Activated CD4-positive, alpha-beta memory T cell treated with anti-CD3 and anti-CD28 coated beads, Interleukin-2, amount 10 ng/mL, durations not matched to agents 7 days and 5 days (primary cell): ENCODE measurements at regions of chr3 and their contacts with region 1.

Region 1: DNA sequence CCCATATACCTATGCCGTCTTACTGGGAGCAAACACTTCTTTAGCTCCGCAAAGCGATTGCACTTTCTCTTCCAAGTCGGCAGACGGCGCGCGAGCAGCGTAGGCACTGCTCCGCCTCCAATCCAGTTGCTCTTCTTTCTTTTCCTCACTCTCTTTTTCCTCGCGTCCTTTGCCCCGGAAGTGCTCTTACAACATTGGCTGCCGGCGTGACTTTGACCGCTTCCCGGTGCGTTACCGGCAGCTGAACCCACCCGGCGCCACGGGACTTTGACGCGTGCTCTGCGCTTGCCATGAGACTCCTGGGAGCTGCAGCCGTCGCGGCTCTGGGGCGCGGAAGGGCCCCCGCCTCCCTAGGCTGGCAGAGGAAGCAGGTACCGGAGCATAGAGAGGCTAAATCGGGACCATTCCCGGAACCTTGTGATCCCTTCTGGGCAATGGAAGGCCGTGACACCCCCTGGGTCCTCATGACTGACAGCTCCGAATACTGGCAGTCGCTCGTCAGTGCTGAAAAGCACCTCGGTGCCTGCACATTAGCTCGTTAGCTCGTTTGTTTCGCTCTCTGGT is at the start of gene GFM1:
- DNase-seq: peak; percentile 91
- H3K4me3 Mint-ChIP-seq: peak within 1 kb of the TSS; percentile 93
- H3K27ac Mint-ChIP-seq: peak within 1 kb of the TSS; percentile 78
- H3K4me1 Mint-ChIP-seq: peaks cover 48% of the 10 kb centered on the region
- H3K27me3 Mint-ChIP-seq: no peaks in the 10 kb centered on the region
- total RNA-seq, gene GFM1: 32.4 TPM

Region 2: GRCh38 chr3:158570999-158571974 is 73.1 kb before region 1 on chr3 and contains the start of gene MLF1:
- CTCF ChIA-PET with region 1: interaction called, 22 read pairs
- POLR2A ChIA-PET with region 1: interaction called, 5 read pairs
- DNase-seq: peak; percentile 87
- H3K4me3 Mint-ChIP-seq: peak within 1 kb of the TSS; percentile 75
- H3K27ac Mint-ChIP-seq: peak within 1 kb of the TSS; percentile 31
- H3K4me1 Mint-ChIP-seq: peaks cover 11% of the 10 kb centered on the region
- H3K27me3 Mint-ChIP-seq: peaks cover 18% of the 10 kb centered on the region
- total RNA-seq, gene MLF1: 1.0 to 1.5 TPM

Region 3: DNA sequence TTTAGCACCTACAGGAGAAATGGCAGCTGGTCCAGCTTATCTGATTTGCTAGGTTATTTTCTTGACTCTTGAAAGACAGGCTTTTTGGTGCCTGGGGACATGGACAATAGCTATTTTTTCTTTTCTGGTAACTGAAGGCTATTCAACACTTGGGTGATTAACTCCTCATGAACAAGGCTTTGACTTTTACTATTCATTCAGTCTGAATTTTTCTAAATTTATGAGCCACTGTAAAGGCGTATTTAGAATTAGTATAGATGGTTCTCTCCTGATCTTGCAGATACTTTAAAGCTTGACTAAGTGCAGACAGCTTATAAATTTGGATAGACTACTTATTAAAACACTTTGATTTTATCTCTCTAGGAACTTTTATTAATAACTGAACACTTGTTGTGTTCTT is 18.5 kb before region 1 on chr3:
- CTCF ChIA-PET with region 1: no interaction called
- POLR2A ChIA-PET with region 1: no interaction called
- DNase-seq: no peak
- H3K4me3 Mint-ChIP-seq: no peak overlapping the region
- H3K27ac Mint-ChIP-seq: no peak overlapping the region
- H3K4me1 Mint-ChIP-seq: no peaks in the 10 kb centered on the region
- H3K27me3 Mint-ChIP-seq: peaks cover 3% of the 10 kb centered on the region

Region 4: GRCh38 chr3:158672293-158673176 is 28.1 kb after region 1 on chr3 and contains the start of gene LXN:
- CTCF ChIA-PET with region 1: interaction called, 21 read pairs
- POLR2A ChIA-PET with region 1: interaction called, 8 read pairs
- DNase-seq: peak; percentile 86
- H3K4me3 Mint-ChIP-seq: peak within 1 kb of the TSS; percentile 90
- H3K27ac Mint-ChIP-seq: peak within 1 kb of the TSS; percentile 85
- H3K4me1 Mint-ChIP-seq: peaks cover 28% of the 10 kb centered on the region
- H3K27me3 Mint-ChIP-seq: no peaks in the 10 kb centered on the region
- total RNA-seq, gene LXN: 10.3 to 11.9 TPM

Region 5: GRCh38 chr3:158748237-158748828 is 103.9 kb after region 1 on chr3:
- CTCF ChIA-PET with region 1: no interaction called
- POLR2A ChIA-PET with region 1: no interaction called
- DNase-seq: no peak
- H3K4me3 Mint-ChIP-seq: no peak overlapping the region
- H3K27ac Mint-ChIP-seq: no peak overlapping the region
- H3K4me1 Mint-ChIP-seq: peaks cover 4% of the 10 kb centered on the region
- H3K27me3 Mint-ChIP-seq: no peaks in the 10 kb centered on the region

Region 6: DNA sequence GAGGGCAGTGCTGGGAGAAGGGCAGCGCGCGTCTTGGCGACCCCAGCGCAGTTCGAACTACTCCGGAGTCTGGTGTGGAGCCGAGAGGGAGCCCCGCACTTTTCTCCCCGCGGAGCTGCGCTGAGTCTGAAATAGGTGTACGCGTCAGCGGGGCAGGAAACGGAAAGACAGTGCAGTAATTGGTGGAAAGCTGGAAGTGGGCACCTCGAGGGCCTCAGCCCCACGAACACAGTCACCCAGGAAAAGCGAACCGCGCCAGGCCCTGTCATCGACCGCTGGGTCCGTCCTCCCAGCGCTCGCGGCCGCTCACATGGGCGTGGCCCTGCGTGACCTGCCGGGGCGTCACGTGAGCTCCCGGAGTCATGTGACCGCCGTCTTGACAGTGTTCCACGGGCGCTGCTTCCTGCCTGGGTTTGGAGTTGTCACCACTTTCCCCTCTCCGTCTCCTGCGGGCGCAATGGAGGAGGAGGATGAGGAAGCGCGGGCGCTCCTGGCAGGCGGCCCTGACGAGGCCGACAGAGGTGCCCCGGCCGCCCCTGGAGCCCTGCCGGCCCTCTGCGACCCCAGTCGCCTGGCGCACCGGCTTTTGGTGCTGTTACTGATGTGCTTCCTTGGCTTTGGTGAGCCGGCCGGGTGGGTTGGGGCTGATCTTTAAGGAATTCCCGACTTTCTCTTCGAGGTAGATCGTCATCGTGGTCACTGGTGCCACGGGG is 157.4 kb after region 1 on chr3 and contains the start of gene MFSD1:
- CTCF ChIA-PET with region 1: interaction called, 14 read pairs
- POLR2A ChIA-PET with region 1: interaction called, 9 read pairs
- DNase-seq: peak; percentile 94
- H3K4me3 Mint-ChIP-seq: peak within 1 kb of the TSS; percentile 84
- H3K27ac Mint-ChIP-seq: peak within 1 kb of the TSS; percentile 80
- H3K4me1 Mint-ChIP-seq: peaks cover 25% of the 10 kb centered on the region
- H3K27me3 Mint-ChIP-seq: peaks cover 4% of the 10 kb centered on the region
- total RNA-seq, gene MFSD1: 26.9 to 27.4 TPM